ENCODE measurements at regions of chr7 and their contacts with region 1.

Region 1: GRCh38 chr7:43758029-43758821 is at the start of gene BLVRA:
- DNase-seq: peak; percentile 67 to 78
- ATAC-seq: peak; percentile 78 to 93 (median 87)
- H3K4me3 ChIP-seq: peak within 1 kb of the TSS; percentile 66
- H3K27ac ChIP-seq: peak within 1 kb of the TSS; percentile 74
- H3K4me1 ChIP-seq: peaks cover 8% of the 10 kb centered on the region
- H3K27me3 ChIP-seq: no peaks in the 10 kb centered on the region
- CTCF ChIP-seq: no peak
- total RNA-seq, gene BLVRA: 35.8 to 50.9 (median 40.2) TPM

Region 2: GRCh38 chr7:43834463-43835251 is 76.4 kb after region 1 on chr7:
- intact Hi-C with region 1: loop called in 1 of 2 experiments (anchors 10 kb)
- DNase-seq: no peak
- ATAC-seq: no peak
- H3K4me3 ChIP-seq: peak overlapping the region; percentile 26
- H3K27ac ChIP-seq: no peak overlapping the region
- H3K4me1 ChIP-seq: no peaks in the 10 kb centered on the region
- H3K27me3 ChIP-seq: peaks cover 0 to 4% (median 0%) of the 10 kb centered on the region in 3 donors
- CTCF ChIP-seq: no peak

Measured in psoas muscle (tissue), 8 donors.